Activated T-helper 1 cell treated with anti-CD3 and anti-CD28 coated beads, Interleukin-12 subunit alpha, Interleukin-12 subunit beta, Interleukin-2, Interleukin-4 antibody, amounts not matched to agents 30 ng/mL and 10 ng/mL and 1 ng/mL, durations not matched to agents 14 hours and 24 hours and 36 hours (primary cell): ENCODE measurements at regions of chr1 and their contacts with region 1.

Region 1: GRCh38 chr1:151934048-151934493 is 24.8 kb upstream of the THEM4 start:
- DNase-seq: peak; percentile 32
- H3K4me3 Mint-ChIP-seq: no peak overlapping the region
- H3K27ac Mint-ChIP-seq: no peak overlapping the region
- H3K4me1 Mint-ChIP-seq: peaks cover 9% of the 10 kb centered on the region
- H3K27me3 Mint-ChIP-seq: peaks cover 12% of the 10 kb centered on the region

Region 2: DNA sequence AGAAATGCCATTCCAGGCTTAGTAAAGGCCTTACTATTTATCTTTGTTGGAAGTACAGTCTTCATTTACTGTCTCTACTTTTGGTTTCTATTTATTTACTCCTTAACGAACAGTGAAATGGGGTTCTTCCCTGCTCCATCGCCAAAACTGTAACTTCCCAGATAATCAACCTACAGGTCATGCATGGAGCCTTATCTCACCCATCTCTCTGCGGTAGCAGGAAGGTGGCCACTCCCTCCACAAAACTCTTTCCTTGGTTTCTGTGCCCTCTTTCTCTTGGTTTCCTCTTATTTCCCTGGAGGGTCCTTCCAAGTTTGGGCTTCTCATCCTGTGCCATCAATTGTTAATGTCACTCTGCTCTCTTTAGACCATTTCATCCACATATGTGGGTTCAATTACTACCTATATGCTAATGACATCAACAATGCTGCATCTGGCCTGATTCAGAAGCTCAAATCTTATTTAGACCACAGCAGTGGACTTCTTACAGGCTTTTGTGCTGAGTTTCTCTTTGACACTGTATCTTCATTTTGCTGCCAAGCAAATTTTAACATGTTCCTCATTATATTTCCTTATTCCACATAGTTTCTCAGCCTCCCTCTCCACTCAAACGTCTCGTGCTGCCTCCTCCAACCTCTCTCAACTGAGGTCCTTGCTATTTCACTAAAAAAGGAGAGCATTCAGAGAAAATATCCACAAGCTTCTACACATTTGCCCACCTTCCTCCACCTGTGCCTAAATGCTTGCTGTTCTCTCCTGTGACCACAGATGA is 150.5 kb before region 1 on chr1:
- intact Hi-C with region 1: no loop called
- DNase-seq: no peak
- H3K4me3 Mint-ChIP-seq: no peak overlapping the region
- H3K27ac Mint-ChIP-seq: no peak overlapping the region
- H3K4me1 Mint-ChIP-seq: peaks cover 5% of the 10 kb centered on the region
- H3K27me3 Mint-ChIP-seq: peaks cover 2% of the 10 kb centered on the region

Region 3: DNA sequence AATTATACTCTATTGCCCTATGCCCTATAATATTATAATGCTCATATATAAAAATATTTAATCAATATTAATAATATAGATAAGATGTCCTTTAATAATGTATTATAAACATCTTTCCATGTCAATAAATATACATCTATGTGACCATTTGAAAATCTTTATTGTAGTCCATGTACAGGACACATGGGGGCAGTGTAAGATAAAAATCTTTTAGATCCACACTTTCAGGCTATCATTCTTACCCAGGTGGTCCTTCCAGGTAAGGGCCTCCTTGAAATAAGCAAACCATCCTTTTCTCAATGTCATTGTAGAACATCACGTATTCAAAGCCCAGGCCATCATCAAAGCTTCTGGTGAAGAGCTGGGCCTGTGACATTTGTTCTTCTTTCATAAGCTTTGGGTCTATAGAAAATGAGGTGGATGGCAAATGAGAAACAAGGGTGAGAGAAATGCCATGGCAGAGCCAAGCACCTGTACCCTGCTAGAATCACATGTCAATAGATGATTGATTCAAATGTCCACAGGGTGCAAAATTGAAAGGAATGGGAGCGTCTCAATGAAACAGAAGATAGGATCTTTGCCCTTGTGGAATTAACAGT is 45.0 kb before region 1 on chr1:
- intact Hi-C with region 1: loop called (anchors 2 kb)
- DNase-seq: no peak
- H3K4me3 Mint-ChIP-seq: no peak overlapping the region
- H3K27ac Mint-ChIP-seq: no peak overlapping the region
- H3K4me1 Mint-ChIP-seq: peaks cover 30% of the 10 kb centered on the region
- H3K27me3 Mint-ChIP-seq: no peaks in the 10 kb centered on the region

Region 4: DNA sequence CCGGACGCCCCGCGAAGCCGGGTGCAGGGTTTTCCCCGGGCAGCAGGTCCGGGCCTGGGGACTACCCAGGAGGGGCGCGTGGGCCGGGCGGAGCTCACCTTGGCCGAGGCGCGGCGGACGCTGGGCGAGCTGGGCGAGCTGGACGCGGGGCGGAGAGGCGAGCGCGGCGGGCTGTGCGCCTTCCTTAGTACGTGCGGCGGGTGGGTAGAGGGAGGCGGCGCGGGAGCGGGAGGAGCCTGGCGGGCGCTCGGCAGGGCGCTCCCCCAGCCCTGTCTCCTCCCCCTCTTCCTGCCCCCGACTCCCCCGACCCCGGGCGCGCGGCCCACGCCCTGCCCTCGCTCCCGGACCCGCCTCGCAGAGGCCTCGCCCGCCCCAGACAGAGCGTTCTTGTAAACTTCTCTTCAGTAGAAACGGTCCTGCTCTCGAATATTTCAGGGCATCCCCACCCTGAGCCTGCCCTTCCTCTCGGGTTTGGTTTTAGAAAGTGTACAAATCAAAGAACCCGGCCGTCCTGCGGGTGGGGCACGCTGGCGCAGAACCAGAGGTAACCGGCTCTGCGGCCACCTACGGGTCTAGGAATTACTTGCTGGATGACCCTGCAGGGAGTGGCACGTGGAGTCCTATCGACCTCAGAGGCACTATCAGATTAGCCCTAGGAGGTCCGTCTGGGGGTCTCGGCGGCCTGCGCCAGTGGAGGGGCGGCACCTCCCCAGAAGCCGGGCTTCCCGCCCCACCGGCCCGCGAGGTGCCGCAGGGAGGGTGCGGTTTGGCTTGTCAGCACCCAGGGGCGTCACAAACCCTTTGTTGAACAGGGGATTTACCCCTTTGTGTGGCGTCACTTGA is 59.8 kb after region 1 on chr1 and contains the start of gene S100A10:
- intact Hi-C with region 1: loop called (anchors 1 kb)
- DNase-seq: peak; percentile 77
- H3K4me3 Mint-ChIP-seq: peak within 1 kb of the TSS; percentile 98
- H3K27ac Mint-ChIP-seq: peak within 1 kb of the TSS; percentile 98
- H3K4me1 Mint-ChIP-seq: peaks cover 49% of the 10 kb centered on the region
- H3K27me3 Mint-ChIP-seq: peaks cover 1% of the 10 kb centered on the region
- total RNA-seq, gene S100A10: 105 and 106 TPM in 2 replicates

Region 5: DNA sequence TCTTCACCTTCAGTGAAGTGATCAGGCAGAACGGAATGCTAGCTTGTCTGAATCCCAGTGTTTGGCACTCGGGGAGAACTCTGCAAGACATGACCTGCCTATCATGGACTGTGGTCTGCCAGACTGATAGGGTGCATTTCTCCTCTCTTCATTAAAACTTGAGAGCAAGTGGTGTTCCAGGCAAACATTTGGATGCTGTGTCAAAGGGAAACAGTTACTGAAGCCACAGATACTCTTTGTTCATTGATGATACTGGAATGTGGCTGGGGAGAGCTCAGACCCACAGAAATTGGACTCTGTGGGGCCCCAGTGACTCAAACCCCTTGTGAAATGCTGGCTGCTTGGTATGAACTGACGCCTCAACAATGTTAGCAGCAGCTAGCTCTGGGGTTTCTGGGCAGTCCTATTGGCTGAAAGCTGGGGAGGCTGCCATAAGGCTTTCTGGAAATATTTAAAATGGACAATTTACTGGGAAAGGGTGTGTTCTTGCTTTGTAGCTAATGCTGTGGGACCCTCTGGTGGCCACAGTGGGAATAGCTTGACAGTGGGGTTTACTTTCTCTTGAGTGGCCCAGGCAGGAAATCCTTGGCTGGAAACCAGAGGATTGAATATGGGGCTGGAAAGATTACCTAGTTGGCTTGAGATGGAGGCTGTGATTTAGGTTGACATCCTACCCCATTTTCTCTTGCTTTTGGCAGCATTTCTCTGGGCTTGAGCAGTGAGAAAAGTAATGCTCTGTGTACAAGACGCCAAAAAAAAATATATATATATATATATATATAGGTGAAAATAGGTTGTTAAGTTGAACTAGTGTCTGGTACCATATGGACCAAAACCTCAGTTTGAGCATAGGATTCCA is 67.5 kb after region 1 on chr1:
- intact Hi-C with region 1: loop called (anchors 1 kb)
- DNase-seq: peak; percentile 50
- H3K4me3 Mint-ChIP-seq: no peak overlapping the region
- H3K27ac Mint-ChIP-seq: no peak overlapping the region
- H3K4me1 Mint-ChIP-seq: peaks cover 7% of the 10 kb centered on the region
- H3K27me3 Mint-ChIP-seq: peaks cover 35% of the 10 kb centered on the region

Region 6: GRCh38 chr1:152013664-152014237 is 79.7 kb after region 1 on chr1:
- intact Hi-C with region 1: loop called (anchors 1 kb)
- DNase-seq: peak; percentile 42
- H3K4me3 Mint-ChIP-seq: no peak overlapping the region
- H3K27ac Mint-ChIP-seq: no peak overlapping the region
- H3K4me1 Mint-ChIP-seq: peaks cover 7% of the 10 kb centered on the region
- H3K27me3 Mint-ChIP-seq: peaks cover 26% of the 10 kb centered on the region